Activated B cell treated with CpG ODN at 0.5 μM for 24 hours (primary cell): ENCODE measurements at regions of chr1 and their contacts with region 1.

Region 1: GRCh38 chr1:150186789-150187559 is 37.3 kb downstream of the PLEKHO1 start:
- DNase-seq: peak; percentile 46
- ATAC-seq: peak; percentile 81
- H3K4me3 Mint-ChIP-seq: peak overlapping the region; percentile 73
- H3K27ac Mint-ChIP-seq: peak overlapping the region; percentile 89
- H3K4me1 Mint-ChIP-seq: peaks cover 13% of the 10 kb centered on the region
- H3K27me3 Mint-ChIP-seq: no peaks in the 10 kb centered on the region
- CTCF ChIP-seq: no peak

Region 2: GRCh38 chr1:149962123-149962548 is 224.8 kb before region 1 on chr1:
- CTCF ChIA-PET with region 1: interaction called, 57 read pairs
- POLR2A ChIA-PET with region 1: interaction called, 8 read pairs
- intact Hi-C with region 1: loop called (anchors 1 kb)
- DNase-seq: no peak
- ATAC-seq: peak; percentile 60
- H3K4me3 Mint-ChIP-seq: no peak overlapping the region
- H3K27ac Mint-ChIP-seq: no peak overlapping the region
- H3K4me1 Mint-ChIP-seq: peaks cover 4% of the 10 kb centered on the region
- H3K27me3 Mint-ChIP-seq: peaks cover 2% of the 10 kb centered on the region
- CTCF ChIP-seq: peak; percentile 99

Region 3: GRCh38 chr1:150072959-150073358 is 114.0 kb before region 1 on chr1:
- CTCF ChIA-PET with region 1: interaction called, 90 read pairs
- POLR2A ChIA-PET with region 1: interaction called, 35 read pairs
- intact Hi-C with region 1: loop called (anchors 1 kb)
- DNase-seq: no peak
- ATAC-seq: peak; percentile 69
- H3K4me3 Mint-ChIP-seq: no peak overlapping the region
- H3K27ac Mint-ChIP-seq: peak overlapping the region; percentile 5
- H3K4me1 Mint-ChIP-seq: peaks cover 39% of the 10 kb centered on the region
- H3K27me3 Mint-ChIP-seq: no peaks in the 10 kb centered on the region
- CTCF ChIP-seq: no peak

Region 4: DNA sequence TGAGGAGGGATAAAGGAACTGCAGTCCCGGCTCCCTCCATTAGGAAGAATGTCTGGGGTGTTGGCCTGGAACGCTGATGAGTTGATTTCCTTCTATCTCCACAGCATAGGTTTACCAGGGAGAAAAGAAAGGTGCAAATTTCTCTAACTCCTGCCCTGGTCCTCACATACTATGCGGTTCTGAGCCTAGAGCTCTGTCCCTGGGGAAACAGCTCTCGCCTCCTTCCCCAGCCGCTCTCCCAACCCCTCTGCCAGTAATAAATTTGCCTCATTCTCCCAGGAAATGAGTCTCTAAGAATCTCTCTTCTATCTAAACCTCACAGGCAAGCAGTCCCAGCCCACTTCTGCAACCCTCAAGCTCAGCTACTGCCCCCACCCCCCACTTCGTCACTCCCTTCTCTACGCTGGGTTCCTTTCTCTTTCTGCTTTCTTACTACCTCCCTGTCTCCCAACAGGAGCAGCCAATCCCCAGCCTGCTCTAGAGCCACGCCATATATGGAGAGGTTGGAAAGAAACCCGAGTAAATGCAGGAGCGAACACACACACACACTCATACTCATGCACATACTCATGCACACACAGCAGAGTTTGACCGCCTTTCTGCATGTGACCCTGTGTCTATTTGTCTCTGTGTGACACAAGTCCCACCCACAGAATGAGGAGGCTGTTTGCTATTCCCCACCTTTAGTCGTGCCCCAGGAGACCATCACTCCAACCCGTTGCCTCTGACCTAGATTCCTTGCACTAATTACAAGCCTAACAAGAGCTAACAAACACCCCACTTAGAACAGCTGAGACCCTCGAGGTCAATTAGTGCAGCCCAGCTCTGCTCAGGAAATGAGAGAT is 23.9 kb before region 1 on chr1:
- CTCF ChIA-PET with region 1: interaction called, 37 read pairs
- POLR2A ChIA-PET with region 1: interaction called, 52 read pairs
- intact Hi-C with region 1: loop called (anchors 1 kb)
- DNase-seq: peak; percentile 34
- ATAC-seq: peak; percentile 28
- H3K4me3 Mint-ChIP-seq: peak overlapping the region; percentile 81
- H3K27ac Mint-ChIP-seq: peak overlapping the region; percentile 98
- H3K4me1 Mint-ChIP-seq: peaks cover 86% of the 10 kb centered on the region
- H3K27me3 Mint-ChIP-seq: no peaks in the 10 kb centered on the region
- CTCF ChIP-seq: no peak

Region 5: GRCh38 chr1:150176593-150176992 is 10.4 kb before region 1 on chr1:
- CTCF ChIA-PET with region 1: interaction called, 37 read pairs
- POLR2A ChIA-PET with region 1: interaction called, 13 read pairs
- intact Hi-C with region 1: no loop called
- DNase-seq: no peak
- ATAC-seq: no peak
- H3K4me3 Mint-ChIP-seq: no peak overlapping the region
- H3K27ac Mint-ChIP-seq: no peak overlapping the region
- H3K4me1 Mint-ChIP-seq: no peaks in the 10 kb centered on the region
- H3K27me3 Mint-ChIP-seq: no peaks in the 10 kb centered on the region
- CTCF ChIP-seq: no peak

Region 6: DNA sequence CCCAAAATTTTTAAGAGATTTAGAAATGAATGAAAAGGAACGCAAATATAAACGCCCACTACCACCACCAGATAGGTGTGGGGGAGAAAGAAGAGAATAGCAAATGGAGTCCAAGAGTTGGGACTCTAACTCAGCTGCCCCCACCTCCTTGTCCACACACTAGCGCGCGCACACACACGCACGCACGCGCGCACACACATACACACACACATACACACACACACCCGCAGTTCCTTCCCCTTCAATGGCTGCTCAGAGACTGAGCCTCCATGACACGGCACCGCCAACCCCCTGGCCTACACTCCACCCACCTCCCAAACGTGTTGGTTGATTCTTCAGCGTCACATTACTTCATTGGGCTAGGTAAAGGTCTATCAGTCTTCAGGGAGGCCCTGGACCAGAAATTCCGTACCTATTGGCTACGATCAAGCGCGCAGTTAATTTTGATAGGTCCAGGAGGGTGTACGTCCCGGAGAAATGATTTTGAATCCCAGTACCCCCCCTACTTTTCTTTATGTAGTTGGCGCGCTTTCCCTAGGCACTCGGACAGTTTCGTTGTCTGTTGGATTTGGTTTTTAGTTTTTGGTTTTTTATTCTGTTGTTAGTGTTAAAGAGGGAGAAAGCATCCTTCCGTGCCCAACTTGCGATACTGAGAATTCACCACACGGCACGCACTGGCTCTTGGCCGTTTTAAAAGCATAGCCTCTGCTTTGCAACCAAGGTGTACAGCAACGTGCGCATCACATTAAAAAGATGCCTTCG is 49.1 kb after region 1 on chr1 and contains the start of gene ANP32E:
- CTCF ChIA-PET with region 1: interaction called, 5 read pairs
- POLR2A ChIA-PET with region 1: interaction called, 12 read pairs
- intact Hi-C with region 1: no loop called
- DNase-seq: peak; percentile 82
- ATAC-seq: peak; percentile 88
- H3K4me3 Mint-ChIP-seq: no peak within 1 kb of the TSS
- H3K27ac Mint-ChIP-seq: no peak within 1 kb of the TSS
- H3K4me1 Mint-ChIP-seq: peaks cover 22% of the 10 kb centered on the region
- H3K27me3 Mint-ChIP-seq: peaks cover 2% of the 10 kb centered on the region
- CTCF ChIP-seq: no peak
- total RNA-seq, gene ANP32E: 70.5 and 84.3 TPM in 2 replicates